ENCODE measurements at regions of chr6 and their contacts with region 1.

Region 1: DNA sequence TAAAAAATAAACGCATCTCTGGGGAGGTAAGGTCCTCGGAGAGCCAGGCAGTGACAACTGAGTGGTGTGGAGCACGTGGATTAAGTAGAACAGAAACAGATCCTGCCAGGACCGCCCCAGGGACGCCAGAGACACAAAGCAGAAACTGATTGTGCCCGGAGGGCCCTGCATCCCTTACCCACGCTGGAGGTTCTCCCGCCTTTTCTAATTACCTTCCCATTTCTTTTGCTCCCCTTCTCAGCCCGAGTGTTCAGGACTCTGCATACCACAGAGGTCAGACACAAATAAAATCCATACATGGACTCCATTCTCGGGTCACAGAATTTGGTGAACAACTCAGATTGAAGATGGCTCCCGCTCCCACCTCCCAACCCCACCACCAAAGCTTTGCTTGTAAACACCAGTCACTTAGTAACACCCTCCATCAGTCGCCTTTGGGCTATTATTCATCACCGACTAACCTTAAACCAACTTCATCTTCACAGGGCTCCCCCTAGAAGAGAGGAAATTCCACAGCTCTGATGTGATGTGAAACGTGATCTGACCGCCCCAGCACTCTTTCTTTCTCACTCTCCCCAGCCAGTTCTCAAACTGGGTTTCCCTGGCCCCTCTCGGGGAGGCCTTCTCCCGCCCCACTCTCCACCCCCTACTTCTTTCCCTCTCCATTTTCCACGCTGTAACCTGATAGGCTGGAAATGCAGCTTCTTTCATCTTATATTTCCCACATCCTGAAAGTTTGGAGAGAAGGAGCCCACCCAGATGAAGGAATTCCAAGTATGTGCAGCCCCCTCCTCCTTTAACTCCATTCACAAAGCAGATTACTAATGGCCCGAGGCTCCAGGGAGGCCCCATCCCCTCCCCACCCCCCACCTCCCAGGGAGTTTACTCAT is 32.5 kb upstream of the PIM1 start:
- DNase-seq: peak; percentile 81
- ATAC-seq: peak; percentile 65
- H3K4me3 Mint-ChIP-seq: peak overlapping the region; percentile 98
- H3K27ac Mint-ChIP-seq: peak overlapping the region; percentile 100
- H3K4me1 Mint-ChIP-seq: peaks cover 75% of the 10 kb centered on the region
- H3K27me3 Mint-ChIP-seq: no peaks in the 10 kb centered on the region
- CTCF ChIP-seq: no peak

Region 2: GRCh38 chr6:37125783-37126492 is 11.5 kb before region 1 on chr6:
- CTCF ChIA-PET with region 1: interaction called, 9 read pairs
- POLR2A ChIA-PET with region 1: interaction called, 46 read pairs
- DNase-seq: peak; percentile 80
- ATAC-seq: peak; percentile 77
- H3K4me3 Mint-ChIP-seq: peak overlapping the region; percentile 73
- H3K27ac Mint-ChIP-seq: peak overlapping the region; percentile 100
- H3K4me1 Mint-ChIP-seq: peaks cover 85% of the 10 kb centered on the region
- H3K27me3 Mint-ChIP-seq: no peaks in the 10 kb centered on the region
- CTCF ChIP-seq: no peak

Region 3: GRCh38 chr6:37190159-37190535 is 52.7 kb after region 1 on chr6:
- CTCF ChIA-PET with region 1: no interaction called
- POLR2A ChIA-PET with region 1: interaction called, 13 read pairs
- DNase-seq: no peak
- ATAC-seq: no peak
- H3K4me3 Mint-ChIP-seq: no peak overlapping the region
- H3K27ac Mint-ChIP-seq: no peak overlapping the region
- H3K4me1 Mint-ChIP-seq: peaks cover 4% of the 10 kb centered on the region; the same call in 1 of the 2 replicates
- H3K27me3 Mint-ChIP-seq: no peaks in the 10 kb centered on the region
- CTCF ChIP-seq: no peak

Region 4: GRCh38 chr6:37381579-37381978 is 244.1 kb after region 1 on chr6:
- CTCF ChIA-PET with region 1: no interaction called
- POLR2A ChIA-PET with region 1: no interaction called
- DNase-seq: peak; percentile 51
- ATAC-seq: peak; percentile 87
- H3K4me3 Mint-ChIP-seq: no peak overlapping the region
- H3K27ac Mint-ChIP-seq: no peak overlapping the region
- H3K4me1 Mint-ChIP-seq: no peaks in the 10 kb centered on the region
- H3K27me3 Mint-ChIP-seq: no peaks in the 10 kb centered on the region
- CTCF ChIP-seq: peak; percentile 52

Measured in WTC11 (cell line).